ENCODE measurements at regions of chr20 and their contacts with region 1.

Region 1: GRCh38 chr20:407133-407952 is 756 bp upstream of the RBCK1 start:
- DNase-seq: peak; percentile 91
- ATAC-seq: peak; percentile 87
- H3K4me3 ChIP-seq: peak overlapping the region; percentile 48
- H3K27ac ChIP-seq: peak overlapping the region; percentile 93 to 99
- H3K4me1 ChIP-seq: peaks cover 31% of the 10 kb centered on the region
- CTCF ChIP-seq: peak; percentile 47
- EP300 ChIP-seq: no peak
- POLR2A ChIP-seq: peak; percentile 74
- RAD21 ChIP-seq: peak; percentile 26 to 54; a peak in 4 of 5 replicates

Region 2: GRCh38 chr20:371755-372542 is 35.4 kb before region 1 on chr20:
- CTCF ChIA-PET with region 1: interaction called, 160 read pairs
- POLR2A ChIA-PET with region 1: interaction called, 26 read pairs
- DNase-seq: peak; percentile 84 to 96
- ATAC-seq: peak; percentile 73 to 74
- H3K4me3 ChIP-seq: no peak overlapping the region; the same call in 2 of the 3 replicates
- H3K27ac ChIP-seq: peak overlapping the region; percentile 94 to 98
- H3K4me1 ChIP-seq: peaks cover 81% of the 10 kb centered on the region
- CTCF ChIP-seq: no peak
- EP300 ChIP-seq: peak; percentile 92 to 96; a peak in 3 of 5 replicates
- POLR2A ChIP-seq: no peak
- RAD21 ChIP-seq: peak in 1 of 2 experiments; percentile 58; a peak in 3 of 5 replicates

Region 3: DNA sequence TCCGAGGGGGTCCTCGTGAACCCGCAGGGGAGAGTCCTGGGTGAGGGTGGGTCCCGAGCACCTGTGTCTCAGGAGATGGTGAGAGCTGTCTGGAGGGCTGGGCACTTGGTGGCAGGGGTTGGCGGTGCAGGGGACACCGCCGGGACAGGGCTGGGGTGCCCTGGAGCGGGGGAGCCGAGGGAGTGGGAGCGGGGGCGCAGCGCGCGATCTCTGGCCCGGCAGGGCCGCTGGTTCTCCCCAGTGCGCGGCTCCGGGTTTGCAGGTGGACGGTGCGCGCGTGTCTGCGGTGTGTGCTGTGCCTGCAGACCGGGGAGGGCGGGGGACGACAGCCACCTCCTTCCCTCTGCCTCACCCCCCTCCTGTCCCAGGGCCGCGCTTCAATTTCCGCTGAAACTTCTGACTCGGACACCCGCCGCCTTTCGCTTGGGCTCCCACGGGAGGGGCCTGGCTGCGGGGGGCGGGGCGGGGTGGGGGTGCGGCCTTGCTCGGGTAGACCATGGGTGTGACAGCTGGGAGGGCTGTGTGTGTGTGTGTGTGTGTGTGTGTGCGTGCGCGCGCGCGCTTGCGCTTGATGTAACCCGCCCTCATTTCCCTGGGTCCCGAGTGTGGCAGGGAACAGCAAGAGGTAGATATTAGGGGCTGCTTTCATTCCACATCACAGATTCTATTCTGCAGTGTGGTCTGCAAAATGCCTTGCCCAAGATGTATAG is 25.6 kb before region 1 on chr20:
- CTCF ChIA-PET with region 1: interaction called, 160 read pairs
- POLR2A ChIA-PET with region 1: interaction called, 106 read pairs
- DNase-seq: peak; percentile 64 to 91
- ATAC-seq: peak; percentile 68 to 72
- H3K4me3 ChIP-seq: peak overlapping the region; percentile 93
- H3K27ac ChIP-seq: peak overlapping the region; percentile 94 to 98
- H3K4me1 ChIP-seq: peaks cover 65% of the 10 kb centered on the region
- CTCF ChIP-seq: no peak
- EP300 ChIP-seq: peak; percentile 33 to 40; a peak in 2 of 5 replicates
- POLR2A ChIP-seq: peak; percentile 41; the same call in 1 of the 2 replicates
- RAD21 ChIP-seq: peak in 1 of 2 experiments; percentile 43; a peak in 2 of 5 replicates

Region 4: GRCh38 chr20:396619-397431 is 10.5 kb before region 1 on chr20:
- CTCF ChIA-PET with region 1: interaction called, 10 read pairs
- POLR2A ChIA-PET with region 1: interaction called, 12 read pairs
- DNase-seq: no peak
- ATAC-seq: peak in 1 of 2 experiments; percentile 21; a peak in 5 of 6 replicates
- H3K4me3 ChIP-seq: no peak overlapping the region
- H3K27ac ChIP-seq: peak overlapping the region; percentile 42 to 60; a peak in 3 of 6 replicates
- H3K4me1 ChIP-seq: peaks cover 44% of the 10 kb centered on the region
- CTCF ChIP-seq: no peak
- EP300 ChIP-seq: no peak
- POLR2A ChIP-seq: no peak
- RAD21 ChIP-seq: no peak

Measured in A549 (cell line).